Head of caudate nucleus (tissue), 42 donors: ENCODE measurements at regions of chr14 and their contacts with region 1.

Region 1: DNA sequence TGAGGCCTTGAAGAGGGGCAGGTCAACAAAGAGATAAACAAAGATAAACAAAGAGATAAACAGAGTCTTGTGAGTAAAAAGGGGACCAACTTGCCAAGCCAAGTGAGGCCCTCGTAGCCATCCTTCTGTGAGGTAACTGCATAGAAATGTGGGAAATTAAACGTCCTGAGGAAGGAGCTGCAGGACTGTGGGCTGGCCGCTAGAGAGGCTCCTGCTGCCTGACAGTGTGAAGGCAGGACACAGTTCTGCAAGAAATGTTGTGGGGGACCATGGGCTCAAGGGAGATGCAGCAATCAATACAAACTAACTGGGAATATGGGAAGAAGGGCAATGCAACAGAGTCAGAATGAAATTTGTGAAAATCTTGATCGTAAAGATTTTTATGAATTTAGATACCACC is 91.9 kb downstream of the SLC8A3 start:
- DNase-seq: peak in 4 of 42 donors; percentile 22 to 47 (median 30)

Region 2: DNA sequence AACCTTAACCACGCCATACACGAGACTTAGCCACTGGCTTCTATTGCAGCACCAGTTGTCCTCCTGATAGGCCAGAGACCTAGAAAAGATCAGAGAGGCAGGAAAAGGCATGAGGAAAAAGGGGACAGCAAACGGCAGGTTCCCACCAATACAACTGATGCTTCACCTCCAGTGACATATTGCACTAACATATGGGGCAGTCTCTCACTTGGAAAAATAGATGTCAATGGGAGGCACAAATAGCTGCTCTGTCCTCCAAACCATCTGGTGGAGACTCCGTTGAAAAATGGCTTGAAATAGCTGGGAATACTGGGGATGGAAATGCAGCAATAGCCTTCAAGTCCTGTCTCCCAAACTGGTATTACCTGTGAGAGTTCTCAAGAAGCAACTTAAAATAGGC is 71.5 kb after region 1 on chr14:
- intact Hi-C with region 1: loop called (anchors 10 kb)
- DNase-seq: no peak